ENCODE measurements at regions of chr3 and their contacts with region 1.

Region 1: GRCh38 chr3:128863560-128863959 is 15.9 kb upstream of the ACAD9 start:
- DNase-seq: peak in 3 of 10 donors; percentile 12 to 64 (median 64)

Region 2: DNA sequence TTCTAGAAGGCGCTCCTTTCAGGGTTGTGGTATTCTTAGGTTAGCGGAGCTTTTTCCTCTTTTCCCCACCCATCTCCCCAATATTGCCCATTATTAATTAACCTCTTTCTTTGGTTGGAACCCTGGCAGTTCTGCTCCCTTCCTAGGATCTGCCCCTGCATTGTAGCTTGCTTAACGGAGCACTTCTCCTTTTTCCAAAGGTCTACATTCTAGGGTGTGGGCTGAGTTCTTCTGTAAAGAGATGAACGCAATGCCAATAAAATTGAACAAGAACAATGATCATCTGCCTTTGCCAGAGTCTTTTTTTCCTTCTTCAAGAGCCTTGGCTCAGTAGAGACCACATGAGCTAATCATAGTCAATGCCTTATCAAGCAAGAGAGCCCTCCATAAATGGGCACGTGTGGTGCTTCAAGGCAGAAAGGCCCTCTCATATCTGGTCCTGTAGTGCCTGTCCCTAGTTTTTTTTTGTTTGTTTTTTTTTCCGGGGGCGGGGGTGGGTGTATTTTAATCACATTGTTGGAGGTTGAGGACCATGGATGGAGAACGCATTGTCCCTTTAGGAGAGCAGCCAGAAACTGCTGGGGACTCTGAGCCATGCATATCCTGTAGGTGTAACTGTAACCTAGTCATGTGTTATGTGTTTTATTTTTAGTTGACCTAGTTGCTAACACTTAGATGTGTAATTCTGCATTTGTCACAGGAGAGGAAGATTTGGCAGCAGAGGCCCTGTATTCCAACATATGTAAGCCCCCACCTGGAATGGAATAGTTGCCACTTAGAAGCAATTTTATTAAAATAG is 48.8 kb before region 1 on chr3:
- intact Hi-C with region 1: loop called (anchors 10 kb)
- DNase-seq: no peak

Region 3: GRCh38 chr3:128922804-128923459 is 59.4 kb after region 1 on chr3:
- intact Hi-C with region 1: no loop called
- DNase-seq: peak in 1 of 10 donors; percentile 33

Measured in posterior cingulate gyrus (tissue), 11 donors.